CD4-positive, alpha-beta memory T cell (primary cell): ENCODE measurements at regions of chr14 and their contacts with region 1.

Region 1: DNA sequence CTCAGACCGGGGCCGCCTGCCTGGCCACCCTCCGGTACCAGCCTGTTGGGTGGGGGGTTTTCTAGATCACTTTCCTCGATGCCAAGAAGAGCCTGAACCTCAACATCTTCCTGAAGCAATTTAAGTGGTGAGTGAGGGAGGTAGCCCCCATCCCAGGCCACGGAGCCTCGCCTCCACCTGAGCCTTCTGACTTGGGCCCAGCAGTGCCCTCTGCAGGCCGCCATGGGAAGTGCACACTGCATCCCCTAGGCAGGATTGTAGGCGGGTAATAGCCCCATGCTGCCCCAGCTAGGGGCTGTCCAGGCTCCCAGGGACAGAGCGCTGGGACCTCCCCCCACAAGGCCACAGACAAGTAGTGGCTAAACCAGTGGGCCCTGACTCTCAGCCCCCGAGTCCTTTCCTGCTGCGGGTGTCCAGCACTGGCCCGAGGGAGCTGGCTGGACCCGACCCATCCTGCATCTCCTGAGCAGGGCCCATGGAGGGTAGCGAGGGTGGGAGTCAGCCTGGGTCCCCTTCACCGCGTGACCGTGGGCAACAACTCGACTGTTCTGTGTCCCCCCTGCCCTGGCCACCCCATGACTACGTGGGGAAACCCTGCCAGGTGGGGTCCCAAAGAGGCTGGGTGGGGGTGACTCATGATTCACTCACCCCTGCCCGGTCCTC is 15.3 kb upstream of the ADSS1 start:
- DNase-seq: peak; percentile 62 to 76 (median 67)
- H3K4me3 ChIP-seq: no peak overlapping the region
- H3K4me3 Mint-ChIP-seq: no peak overlapping the region
- H3K27ac ChIP-seq: no peak overlapping the region
- H3K27ac Mint-ChIP-seq: peak overlapping the region in 4 of 7 donors; percentile 18 to 74 (median 34)
- H3K4me1 ChIP-seq: peaks cover 5% of the 10 kb centered on the region
- H3K4me1 Mint-ChIP-seq: peaks cover 1 to 5% (median 3%) of the 10 kb centered on the region in 4 donors
- H3K27me3 ChIP-seq: no peaks in the 10 kb centered on the region
- H3K27me3 Mint-ChIP-seq: no peaks in the 10 kb centered on the region

Region 2: DNA sequence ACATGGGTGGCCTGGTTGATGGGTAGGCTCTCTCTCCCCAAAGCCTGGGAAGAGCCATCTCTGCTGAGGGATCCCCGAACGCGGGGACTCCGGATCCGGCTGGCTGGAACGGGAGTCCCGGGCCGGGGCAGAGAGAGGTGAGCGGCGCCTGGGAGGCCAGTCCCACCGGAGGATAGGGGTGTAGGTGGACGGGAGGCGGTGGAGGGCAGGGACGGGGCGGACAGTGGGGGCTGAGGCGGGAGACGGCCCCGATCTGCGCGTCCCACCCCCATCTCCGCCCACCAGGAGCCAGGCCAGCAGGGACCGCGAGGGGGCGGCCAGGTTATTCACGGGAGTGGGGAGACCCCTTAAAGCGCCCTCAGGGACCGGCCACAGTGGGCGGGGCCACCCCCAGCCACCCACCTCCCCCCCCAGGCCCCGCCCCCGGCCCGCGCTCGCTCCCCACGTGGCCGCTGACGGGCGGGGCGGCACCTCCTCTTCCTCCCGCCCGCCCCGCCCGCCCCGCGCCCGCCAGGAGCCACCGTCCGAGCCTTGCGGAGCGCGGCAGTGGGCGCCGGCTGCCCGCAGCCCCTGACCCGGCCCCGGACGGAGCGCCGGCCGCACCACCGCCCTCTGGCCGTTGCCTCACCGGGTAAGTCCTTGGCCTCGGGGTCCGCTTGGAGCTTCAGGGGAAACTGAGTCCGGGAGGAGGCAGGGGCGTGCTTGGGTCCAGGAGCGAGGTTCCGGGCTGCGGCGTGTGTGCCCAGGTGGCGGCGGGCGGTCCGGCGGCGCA is 19.4 kb before region 1 on chr14 and contains the start of gene INF2:
- CTCF ChIA-PET with region 1: interaction called, 8 read pairs
- POLR2A ChIA-PET with region 1: interaction called, 5 read pairs
- intact Hi-C with region 1: loop called (anchors 1 kb)
- DNase-seq: peak; percentile 35 to 57 (median 45)
- H3K4me3 ChIP-seq: peak within 1 kb of the TSS; percentile 54 to 57
- H3K4me3 Mint-ChIP-seq: peak within 1 kb of the TSS; percentile 54 to 84 (median 82)
- H3K27ac ChIP-seq: peak within 1 kb of the TSS; percentile 59
- H3K27ac Mint-ChIP-seq: peak within 1 kb of the TSS in 6 of 7 donors; percentile 26 to 66 (median 44)
- H3K4me1 ChIP-seq: peaks cover 79% of the 10 kb centered on the region
- H3K4me1 Mint-ChIP-seq: peaks cover 29 to 68% (median 48%) of the 10 kb centered on the region in 4 donors
- H3K27me3 ChIP-seq: no peaks in the 10 kb centered on the region
- H3K27me3 Mint-ChIP-seq: no peaks in the 10 kb centered on the region
- total RNA-seq, gene INF2: 93.1 to 96.8 TPM

Region 3: DNA sequence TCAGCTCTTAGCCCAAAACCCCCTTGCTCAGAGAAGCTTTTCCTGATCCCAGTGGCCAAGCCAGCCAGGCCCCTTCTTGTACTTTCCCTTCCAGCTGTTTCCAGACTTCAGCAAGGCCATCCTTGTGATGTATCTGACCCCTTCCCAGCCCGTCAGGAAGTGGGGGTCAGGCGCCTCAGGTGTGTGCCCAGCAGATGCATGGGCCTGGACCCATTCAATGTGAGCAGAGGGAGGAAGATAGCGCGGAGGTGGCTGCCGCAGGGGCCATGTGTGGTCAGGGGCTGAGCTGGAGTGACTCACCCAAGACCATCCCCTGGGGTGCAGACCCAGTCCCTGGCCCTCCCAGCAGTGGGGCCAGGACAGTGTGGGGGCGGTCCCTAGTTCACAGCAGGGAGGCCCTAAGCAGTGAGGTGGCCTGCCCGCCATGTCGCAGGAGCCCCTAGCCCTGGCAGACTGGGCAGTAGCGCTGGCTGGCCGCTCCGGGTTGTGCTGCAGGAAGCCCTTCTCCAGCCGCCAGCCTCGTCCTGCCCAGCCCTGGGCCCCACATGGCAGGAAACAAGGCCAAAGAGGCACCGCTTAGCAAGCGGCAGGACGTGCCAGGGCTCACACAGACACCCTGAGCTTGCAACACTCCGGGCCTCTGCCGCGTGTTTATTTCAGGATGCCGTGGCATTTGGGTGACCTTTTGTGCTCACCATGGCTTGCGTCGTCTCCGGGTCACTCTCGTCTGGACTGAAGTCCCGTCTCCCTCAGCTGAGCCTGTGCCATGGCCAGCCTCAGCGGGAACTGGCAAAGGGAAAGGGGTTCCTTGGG is 27.3 kb after region 1 on chr14:
- CTCF ChIA-PET with region 1: no interaction called
- POLR2A ChIA-PET with region 1: no interaction called
- intact Hi-C with region 1: no loop called
- DNase-seq: no peak
- H3K4me3 ChIP-seq: no peak overlapping the region
- H3K4me3 Mint-ChIP-seq: no peak overlapping the region
- H3K27ac ChIP-seq: no peak overlapping the region
- H3K27ac Mint-ChIP-seq: no peak overlapping the region
- H3K4me1 ChIP-seq: no peaks in the 10 kb centered on the region
- H3K4me1 Mint-ChIP-seq: no peaks in the 10 kb centered on the region
- H3K27me3 ChIP-seq: no peaks in the 10 kb centered on the region
- H3K27me3 Mint-ChIP-seq: peaks cover 0 to 1% of the 10 kb centered on the region in 2 donors